ENCODE measurements at regions of chr22 and their contacts with region 1.

Region 1: DNA sequence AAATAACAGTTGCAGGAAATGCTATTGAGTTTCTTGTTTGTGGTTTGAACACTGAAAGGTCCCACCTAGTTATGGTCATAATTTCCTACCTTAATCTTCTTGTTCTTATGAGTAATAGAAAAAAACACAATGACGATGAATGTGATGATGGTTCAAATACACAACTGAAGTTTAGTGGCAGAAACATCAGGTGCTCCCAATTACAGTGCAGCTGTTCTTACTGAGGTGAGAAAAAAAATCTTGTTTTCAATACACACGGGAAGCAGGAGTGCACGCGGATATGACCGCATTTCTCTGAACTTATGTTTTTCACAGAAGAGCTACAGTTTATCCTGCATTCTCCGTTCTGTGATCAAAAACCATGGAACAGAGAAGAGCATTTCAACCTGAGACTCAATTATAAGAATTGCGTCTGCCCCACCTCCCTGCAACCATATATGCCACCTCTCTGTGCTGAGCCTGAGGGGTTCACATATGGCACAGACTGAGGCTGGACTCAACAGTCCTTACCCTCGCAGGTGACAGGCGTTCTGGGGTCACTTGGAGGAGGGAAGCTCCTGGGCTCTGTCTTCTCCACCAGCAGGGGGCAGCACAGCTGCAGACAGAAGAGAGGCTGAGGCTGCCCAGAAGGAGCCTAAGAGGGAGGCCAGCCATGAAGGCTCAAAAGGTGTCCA is 99.7 kb upstream of the IGLL5 start:
- DNase-seq: peak; percentile 79
- CTCF ChIP-seq: peak; percentile 85

Region 2: GRCh38 chr22:22770280-22770871 is 17.5 kb before region 1 on chr22:
- CTCF ChIA-PET with region 1: interaction called, 55 read pairs
- POLR2A ChIA-PET with region 1: no interaction called
- DNase-seq: no peak
- CTCF ChIP-seq: peak; percentile 65

Region 3: DNA sequence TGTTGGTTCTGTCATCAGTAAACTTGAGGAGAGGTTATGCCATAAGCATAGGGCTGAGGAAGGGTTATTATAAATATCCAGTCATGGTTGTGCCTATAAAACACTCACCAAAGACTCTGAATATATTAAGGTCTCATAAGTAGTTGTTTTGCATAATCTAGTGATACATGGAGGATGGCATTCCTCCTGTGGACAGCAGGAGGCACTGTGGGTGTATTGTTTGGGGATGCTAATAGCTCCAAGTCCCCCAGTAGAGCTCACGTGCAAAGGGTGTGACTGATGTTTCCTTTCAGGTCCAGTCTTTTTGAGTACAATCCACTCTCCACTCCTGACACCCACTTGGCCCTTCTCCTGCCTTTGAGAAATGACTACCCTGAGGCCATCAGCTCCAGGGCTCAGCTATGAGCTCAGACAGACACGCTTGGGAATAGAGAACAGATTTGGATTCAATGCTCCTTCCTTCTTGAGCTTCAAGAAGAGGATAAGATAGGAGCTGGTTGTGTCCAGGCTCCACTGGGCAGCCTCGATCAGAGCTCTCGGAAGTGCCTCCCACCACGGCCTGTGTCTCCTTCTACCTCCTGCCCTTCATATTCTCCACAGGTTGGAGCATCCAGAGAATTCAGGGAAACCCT is 14.5 kb after region 1 on chr22:
- CTCF ChIA-PET with region 1: interaction called, 24 read pairs
- POLR2A ChIA-PET with region 1: no interaction called
- DNase-seq: peak; percentile 39
- CTCF ChIP-seq: peak; percentile 16